ENCODE measurements at regions of chr14 and their contacts with region 1.

Region 1: DNA sequence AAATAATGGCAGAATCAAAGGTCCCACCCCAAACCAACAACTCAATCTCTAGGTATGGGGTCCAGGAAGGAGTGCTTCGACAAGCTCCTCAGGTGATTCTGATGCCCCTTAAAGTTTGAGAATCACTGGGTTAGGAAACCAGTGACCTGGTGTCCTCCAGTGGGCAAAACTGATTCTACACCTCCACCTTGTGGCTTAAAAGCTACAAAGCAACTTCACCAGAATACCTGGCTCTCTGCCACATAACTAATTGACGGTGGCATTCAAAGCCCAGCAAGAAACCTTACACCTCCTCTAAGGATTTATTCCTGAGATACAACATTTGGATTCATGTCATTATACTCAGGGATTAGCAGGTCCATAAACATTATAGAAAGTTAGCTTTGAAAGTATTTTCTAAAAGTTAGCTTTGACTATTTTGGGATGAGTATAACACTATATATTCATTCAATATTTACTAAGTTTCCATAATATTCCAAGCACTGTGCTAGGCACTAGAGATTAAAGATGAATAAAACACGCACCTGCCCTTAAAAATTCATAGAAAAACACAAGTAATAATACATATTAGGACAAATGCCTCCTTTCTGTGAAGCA is 45.4 kb downstream of the DCAF5 start:
- DNase-seq: peak in 2 of 5 donors; percentile 20 to 46
- H3K4me3 ChIP-seq: no peak overlapping the region
- H3K27ac ChIP-seq: no peak overlapping the region
- H3K4me1 ChIP-seq: no peaks in the 10 kb centered on the region
- H3K27me3 ChIP-seq: no peaks in the 10 kb centered on the region
- CTCF ChIP-seq: peak in 2 of 3 donors; percentile 65 to 74
- EP300 ChIP-seq: no peak
- POLR2A ChIP-seq: no peak

Region 2: GRCh38 chr14:68862954-68863594 is 244.4 kb before region 1 on chr14:
- intact Hi-C with region 1: loop called in 3 of 4 experiments (anchors 5 to 10 kb)
- DNase-seq: peak; percentile 66 to 87 (median 82)
- H3K4me3 ChIP-seq: no peak overlapping the region
- H3K27ac ChIP-seq: no peak overlapping the region
- H3K4me1 ChIP-seq: no peaks in the 10 kb centered on the region
- H3K27me3 ChIP-seq: no peaks in the 10 kb centered on the region
- CTCF ChIP-seq: peak; percentile 41 to 58 (median 56)
- EP300 ChIP-seq: no peak
- POLR2A ChIP-seq: no peak

Region 3: GRCh38 chr14:68905107-68905895 is 202.2 kb before region 1 on chr14:
- intact Hi-C with region 1: loop called in 3 of 4 experiments (anchors 5 kb)
- DNase-seq: no peak
- H3K4me3 ChIP-seq: no peak overlapping the region
- H3K27ac ChIP-seq: no peak overlapping the region
- H3K4me1 ChIP-seq: no peaks in the 10 kb centered on the region
- H3K27me3 ChIP-seq: no peaks in the 10 kb centered on the region
- CTCF ChIP-seq: no peak
- EP300 ChIP-seq: no peak
- POLR2A ChIP-seq: no peak

Region 4: DNA sequence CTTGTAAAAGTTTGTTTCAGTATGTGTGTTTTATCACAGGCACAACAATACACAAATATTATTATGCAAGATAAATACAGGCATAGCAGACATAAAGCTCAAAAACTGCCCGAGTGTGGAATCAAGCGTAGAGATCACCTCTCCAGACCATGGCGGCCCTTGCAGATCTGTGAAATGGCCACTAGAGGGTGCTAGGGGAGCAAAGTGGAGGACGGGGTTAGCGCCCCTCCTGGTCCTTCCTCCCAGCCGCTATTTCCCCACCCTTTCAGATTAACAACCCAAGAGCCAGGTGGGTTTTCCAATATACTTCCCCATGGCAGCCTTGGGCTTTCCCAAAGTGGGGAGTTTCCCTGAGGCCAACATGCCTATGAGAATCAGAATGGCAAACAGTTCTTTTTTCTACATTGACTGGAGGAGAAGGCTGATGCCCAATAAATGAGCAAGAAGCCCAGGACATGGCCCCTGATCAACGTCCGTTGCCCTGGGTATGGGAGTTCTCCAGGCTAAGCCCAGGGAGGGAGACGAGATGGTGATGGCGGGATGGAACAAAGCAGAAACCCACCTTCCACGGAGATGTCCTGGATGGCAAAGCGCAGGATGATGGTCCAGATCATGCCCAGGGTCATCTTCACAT is 195.8 kb before region 1 on chr14:
- intact Hi-C with region 1: loop called in 3 of 4 experiments (anchors 5 kb)
- DNase-seq: peak; percentile 67 to 84 (median 79)
- H3K4me3 ChIP-seq: no peak overlapping the region
- H3K27ac ChIP-seq: no peak overlapping the region
- H3K4me1 ChIP-seq: no peaks in the 10 kb centered on the region
- H3K27me3 ChIP-seq: no peaks in the 10 kb centered on the region
- CTCF ChIP-seq: peak; percentile 88 to 98 (median 92)
- EP300 ChIP-seq: no peak
- POLR2A ChIP-seq: peak; percentile 15